CD8-positive, alpha-beta T cell (primary cell): ENCODE measurements at regions of chr14 and their contacts with region 1.

Region 1: GRCh38 chr14:61077951-61078720 is 97.1 kb downstream of the SLC38A6 start:
- DNase-seq: no peak
- ATAC-seq: no peak
- H3K4me3 ChIP-seq: no peak overlapping the region
- H3K4me3 Mint-ChIP-seq: no peak overlapping the region
- H3K27ac ChIP-seq: no peak overlapping the region
- H3K27ac Mint-ChIP-seq: no peak overlapping the region
- H3K4me1 ChIP-seq: no peaks in the 10 kb centered on the region
- H3K4me1 Mint-ChIP-seq: no peaks in the 10 kb centered on the region
- H3K27me3 ChIP-seq: no peaks in the 10 kb centered on the region
- H3K27me3 Mint-ChIP-seq: no peaks in the 10 kb centered on the region
- CTCF ChIP-seq: no peak

Region 2: DNA sequence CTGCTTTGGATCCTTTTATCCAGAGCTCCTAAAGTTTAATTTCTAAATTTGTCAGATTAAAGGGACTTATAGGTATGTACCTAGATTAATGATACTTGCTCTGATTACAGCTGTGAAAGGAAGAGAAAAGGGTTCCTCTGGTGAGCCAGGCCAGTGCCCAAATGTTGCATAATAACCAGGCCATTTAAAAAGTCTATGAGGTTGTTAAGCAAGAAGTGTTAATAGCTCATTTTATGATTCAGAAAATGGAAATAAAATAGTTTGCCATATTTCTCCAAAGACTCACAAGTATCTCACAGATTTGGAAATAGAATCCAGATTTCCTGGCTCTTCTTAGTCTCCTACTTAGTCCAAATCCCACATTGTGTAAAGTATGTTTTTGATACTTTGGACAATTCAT is 29.5 kb before region 1 on chr14:
- CTCF ChIA-PET with region 1: no interaction called
- POLR2A ChIA-PET with region 1: no interaction called
- intact Hi-C with region 1: loop called in 1 of 2 experiments (anchors 1 kb)
- DNase-seq: no peak
- ATAC-seq: no peak
- H3K4me3 ChIP-seq: no peak overlapping the region
- H3K4me3 Mint-ChIP-seq: no peak overlapping the region
- H3K27ac ChIP-seq: no peak overlapping the region
- H3K27ac Mint-ChIP-seq: no peak overlapping the region
- H3K4me1 ChIP-seq: no peaks in the 10 kb centered on the region
- H3K4me1 Mint-ChIP-seq: no peaks in the 10 kb centered on the region
- H3K27me3 ChIP-seq: no peaks in the 10 kb centered on the region
- H3K27me3 Mint-ChIP-seq: no peaks in the 10 kb centered on the region
- CTCF ChIP-seq: no peak